ENCODE measurements at regions of chr10 and their contacts with region 1.

Region 1: GRCh38 chr10:75187961-75188426 is 22.6 kb upstream of the VDAC2 start:
- DNase-seq: peak; percentile 50 to 82 (median 72)
- H3K4me3 ChIP-seq: no peak overlapping the region
- H3K4me3 Mint-ChIP-seq: peak overlapping the region in 1 of 7 donors; percentile 65
- H3K27ac ChIP-seq: no peak overlapping the region
- H3K27ac Mint-ChIP-seq: peak overlapping the region; percentile 90 to 94 (median 92)
- H3K4me1 ChIP-seq: peaks cover 5% of the 10 kb centered on the region
- H3K4me1 Mint-ChIP-seq: peaks cover 5 to 7% (median 6%) of the 10 kb centered on the region in 3 donors
- H3K27me3 ChIP-seq: no peaks in the 10 kb centered on the region
- H3K27me3 Mint-ChIP-seq: no peaks in the 10 kb centered on the region

Region 2: DNA sequence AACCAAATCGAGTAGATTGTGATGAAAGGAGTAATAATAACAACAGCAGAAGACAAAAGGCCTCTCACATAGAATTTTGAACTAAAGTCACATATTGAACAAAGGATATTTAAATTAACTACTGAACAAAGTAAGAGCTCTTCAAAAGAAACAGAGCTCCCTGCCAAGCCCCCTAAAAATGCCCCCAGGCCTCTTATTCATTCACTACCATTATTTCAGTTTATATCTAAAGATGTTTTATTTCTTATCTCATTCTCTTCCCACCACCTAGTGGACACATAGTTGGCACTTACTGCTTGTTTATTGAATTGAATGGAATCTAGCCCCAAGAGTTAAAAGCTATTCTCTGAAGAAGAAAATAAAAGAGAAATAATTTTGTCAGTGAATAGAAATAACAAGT is 1152.7 kb before region 1 on chr10:
- CTCF ChIA-PET with region 1: no interaction called
- POLR2A ChIA-PET with region 1: interaction called, 14 read pairs
- DNase-seq: peak in 1 of 5 donors; percentile 5
- H3K4me3 ChIP-seq: no peak overlapping the region
- H3K4me3 Mint-ChIP-seq: no peak overlapping the region
- H3K27ac ChIP-seq: no peak overlapping the region
- H3K27ac Mint-ChIP-seq: peak overlapping the region; percentile 1 to 88 (median 62)
- H3K4me1 ChIP-seq: peaks cover 17% of the 10 kb centered on the region
- H3K4me1 Mint-ChIP-seq: peaks cover 38 to 47% (median 39%) of the 10 kb centered on the region in 3 donors
- H3K27me3 ChIP-seq: no peaks in the 10 kb centered on the region
- H3K27me3 Mint-ChIP-seq: no peaks in the 10 kb centered on the region

Region 3: DNA sequence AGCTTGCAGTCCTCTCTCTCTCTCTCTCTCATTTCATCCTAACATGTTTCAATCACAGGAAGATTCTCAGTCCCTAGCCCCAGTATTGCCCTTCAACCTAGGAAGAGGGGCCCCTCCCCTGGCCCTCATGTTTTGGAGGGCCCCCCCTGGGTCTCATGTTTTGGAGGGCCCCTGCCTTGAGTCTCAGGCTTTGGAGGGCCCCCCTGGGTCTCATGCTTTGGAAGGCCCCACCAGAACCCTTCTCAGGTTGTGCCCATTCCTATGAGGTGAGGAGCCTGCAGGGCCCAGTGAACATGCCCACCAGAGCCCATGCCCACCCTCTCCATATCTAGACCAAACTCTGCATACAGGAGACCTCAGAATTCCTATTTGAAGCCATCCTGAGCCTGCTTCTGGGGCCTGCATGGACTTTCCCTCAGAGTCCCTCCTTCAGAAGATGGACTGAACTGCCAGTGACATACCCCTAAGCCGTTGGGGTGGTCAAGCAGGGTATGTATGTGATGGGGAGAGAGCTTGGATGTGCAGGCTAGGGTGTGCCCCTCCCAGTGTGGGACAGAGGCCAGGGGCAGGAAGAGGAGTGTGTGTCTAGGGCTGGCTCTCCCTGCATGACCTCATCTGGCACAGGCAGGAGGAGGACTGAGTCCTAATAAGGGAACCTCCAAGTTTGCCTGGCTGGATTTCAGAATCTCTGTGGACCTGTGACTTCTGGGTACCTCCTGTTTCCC is 14.5 kb after region 1 on chr10:
- CTCF ChIA-PET with region 1: interaction called, 37 read pairs
- POLR2A ChIA-PET with region 1: no interaction called
- DNase-seq: no peak
- H3K4me3 ChIP-seq: no peak overlapping the region
- H3K4me3 Mint-ChIP-seq: no peak overlapping the region
- H3K27ac ChIP-seq: no peak overlapping the region
- H3K27ac Mint-ChIP-seq: no peak overlapping the region
- H3K4me1 ChIP-seq: no peaks in the 10 kb centered on the region
- H3K4me1 Mint-ChIP-seq: no peaks in the 10 kb centered on the region
- H3K27me3 ChIP-seq: no peaks in the 10 kb centered on the region
- H3K27me3 Mint-ChIP-seq: no peaks in the 10 kb centered on the region

Region 4: GRCh38 chr10:75210282-75211006 is 22.4 kb after region 1 on chr10 and contains the start of gene VDAC2:
- CTCF ChIA-PET with region 1: interaction called, 24 read pairs
- POLR2A ChIA-PET with region 1: interaction called, 9 read pairs
- DNase-seq: peak; percentile 92 to 99 (median 96)
- H3K4me3 ChIP-seq: peak within 1 kb of the TSS; percentile 89
- H3K4me3 Mint-ChIP-seq: peak within 1 kb of the TSS; percentile 96 to 100 (median 98)
- H3K27ac ChIP-seq: peak within 1 kb of the TSS; percentile 98
- H3K27ac Mint-ChIP-seq: peak within 1 kb of the TSS; percentile 99 to 100 (median 100)
- H3K4me1 ChIP-seq: peaks cover 25% of the 10 kb centered on the region
- H3K4me1 Mint-ChIP-seq: peaks cover 26 to 39% (median 32%) of the 10 kb centered on the region in 3 donors
- H3K27me3 ChIP-seq: no peaks in the 10 kb centered on the region
- H3K27me3 Mint-ChIP-seq: peaks cover 0 to 2% of the 10 kb centered on the region in 2 donors
- total RNA-seq, gene VDAC2: 247 to 261 TPM

Region 5: DNA sequence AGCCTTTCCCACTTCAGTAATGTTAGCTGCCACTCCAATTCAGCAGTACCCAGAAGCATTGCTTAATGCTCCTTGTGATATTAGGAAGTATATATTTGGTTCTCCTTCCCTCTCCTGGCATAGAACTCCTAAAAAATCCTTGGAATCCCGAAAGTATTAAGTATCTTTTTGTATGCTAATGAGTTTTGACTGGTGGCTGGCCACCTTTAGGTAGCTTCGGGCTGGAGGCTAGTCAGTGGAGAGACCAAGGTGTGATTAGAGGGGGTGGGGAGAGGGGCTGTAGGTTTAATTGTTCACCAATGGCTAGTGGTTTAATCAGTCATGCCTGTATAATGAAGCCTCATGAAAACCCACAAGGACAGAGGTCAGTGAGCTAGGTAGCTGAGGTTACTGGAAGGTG is 35.5 kb after region 1 on chr10:
- CTCF ChIA-PET with region 1: interaction called, 304 read pairs
- POLR2A ChIA-PET with region 1: interaction called, 5 read pairs
- DNase-seq: no peak
- H3K4me3 ChIP-seq: no peak overlapping the region
- H3K4me3 Mint-ChIP-seq: peak overlapping the region in 1 of 7 donors; percentile 56
- H3K27ac ChIP-seq: no peak overlapping the region
- H3K27ac Mint-ChIP-seq: peak overlapping the region; percentile 56 to 89 (median 77)
- H3K4me1 ChIP-seq: peaks cover 37% of the 10 kb centered on the region
- H3K4me1 Mint-ChIP-seq: peaks cover 34 to 69% (median 49%) of the 10 kb centered on the region in 3 donors
- H3K27me3 ChIP-seq: no peaks in the 10 kb centered on the region
- H3K27me3 Mint-ChIP-seq: no peaks in the 10 kb centered on the region

Region 6: GRCh38 chr10:75235375-75236177 is 47.6 kb after region 1 on chr10 and contains the start of gene COMTD1:
- CTCF ChIA-PET with region 1: interaction called, 304 read pairs
- POLR2A ChIA-PET with region 1: interaction called, 6 read pairs
- DNase-seq: peak; percentile 91 to 95 (median 92)
- H3K4me3 ChIP-seq: peak within 1 kb of the TSS; percentile 75
- H3K4me3 Mint-ChIP-seq: peak within 1 kb of the TSS; percentile 74 to 90 (median 84)
- H3K27ac ChIP-seq: peak within 1 kb of the TSS; percentile 66
- H3K27ac Mint-ChIP-seq: peak within 1 kb of the TSS; percentile 85 to 99 (median 90)
- H3K4me1 ChIP-seq: peaks cover 14% of the 10 kb centered on the region
- H3K4me1 Mint-ChIP-seq: peaks cover 9 to 27% (median 10%) of the 10 kb centered on the region in 3 donors
- H3K27me3 ChIP-seq: no peaks in the 10 kb centered on the region
- H3K27me3 Mint-ChIP-seq: no peaks in the 10 kb centered on the region
- total RNA-seq, gene COMTD1: 43.9 to 47.9 TPM